K562 (cell line): ENCODE measurements at regions of chr2 and their contacts with region 1.

Region 1: DNA sequence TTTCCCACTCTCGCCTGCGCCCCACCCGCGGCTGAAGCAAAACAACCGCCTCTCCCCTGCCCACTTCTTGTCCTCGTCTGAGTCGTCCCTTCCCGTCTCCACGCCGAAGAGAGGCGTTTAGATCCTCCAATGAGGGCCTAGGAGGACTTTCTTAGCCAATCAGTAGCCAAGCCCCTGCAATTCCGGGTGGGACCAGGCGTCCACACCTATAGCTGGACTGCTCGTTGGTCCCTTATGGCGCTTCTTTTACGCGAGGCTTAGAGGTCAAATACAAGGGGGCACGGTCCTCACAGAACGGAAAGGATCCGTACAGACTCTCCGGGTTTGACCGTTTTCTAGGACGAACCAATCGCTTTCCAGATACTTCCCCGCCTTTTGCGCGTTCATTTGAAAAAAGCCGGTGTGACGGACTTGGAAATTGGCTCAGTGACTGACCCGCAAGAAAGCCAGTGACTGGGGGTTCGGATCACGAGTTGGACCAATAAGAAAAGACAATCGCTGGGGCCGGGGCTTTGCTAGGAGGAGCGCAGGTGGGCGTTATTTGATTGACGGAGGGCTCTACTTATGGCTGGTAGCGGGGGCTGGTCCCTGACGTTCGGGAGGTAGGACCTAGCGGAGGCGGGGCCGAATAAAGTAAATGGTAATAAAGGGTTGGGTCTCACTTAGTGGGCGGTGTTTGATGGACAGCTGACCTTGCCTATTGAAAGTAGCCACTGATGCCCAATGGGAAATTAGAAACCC is 565 bp upstream of the PPM1B start:
- DNase-seq: peak; percentile 93 to 99 (median 96)
- ATAC-seq: peak; percentile 89
- H3K4me3 ChIP-seq: peak overlapping the region; percentile 58
- H3K27ac ChIP-seq: peak overlapping the region; percentile 100
- H3K4me1 ChIP-seq: peaks cover 4 to 7% of the 10 kb centered on the region in 2 experiments; a peak in 3 of 5 replicates
- H3K27me3 ChIP-seq: no peaks in the 10 kb centered on the region
- CTCF ChIP-seq: no peak
- EP300 ChIP-seq: peak; percentile 19; the same call in 1 of the 2 replicates
- POLR2A ChIP-seq: peak; percentile 65
- RAD21 ChIP-seq: no peak

Region 2: DNA sequence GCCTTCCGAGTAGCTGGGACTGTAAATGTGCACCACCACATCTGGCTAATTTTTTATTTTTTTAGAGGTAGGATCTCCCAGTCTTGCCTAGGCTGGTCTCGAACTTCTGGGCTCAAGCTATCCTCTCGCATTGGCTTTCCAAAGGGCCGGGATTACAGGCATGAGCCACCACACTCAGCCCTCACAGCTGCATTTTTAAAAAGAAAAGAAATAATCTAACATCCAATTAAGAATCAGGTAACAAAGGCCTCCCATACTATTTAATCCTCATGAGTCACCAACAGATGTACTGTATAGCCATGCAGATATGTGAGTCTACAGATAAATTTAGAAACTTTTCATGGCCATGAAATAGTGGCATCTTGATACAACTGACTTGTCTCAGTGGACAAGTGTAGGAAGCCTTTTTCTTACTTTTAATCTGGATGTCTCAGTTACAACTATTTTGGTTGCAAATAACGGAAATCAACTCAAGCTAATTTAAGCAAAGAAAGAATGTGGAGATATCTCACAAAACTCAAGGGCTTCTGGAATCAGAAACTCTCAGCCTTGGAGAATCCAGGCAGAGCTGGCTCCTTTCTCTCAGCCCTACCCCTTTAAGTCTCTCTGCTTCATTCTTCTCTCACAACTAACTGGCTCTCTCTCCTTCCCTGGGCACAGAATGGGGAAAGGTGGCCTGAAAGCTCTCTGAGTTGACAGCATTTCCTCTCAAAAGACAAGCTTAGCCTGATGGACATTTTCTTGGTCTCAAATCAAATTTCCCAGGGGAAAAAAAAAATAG is 12.3 kb before region 1 on chr2:
- CTCF ChIA-PET with region 1: no interaction called
- POLR2A ChIA-PET with region 1: interaction called, 15 read pairs
- in situ Hi-C with region 1: no loop called
- intact Hi-C with region 1: no loop called
- DNase-seq: peak in 2 of 4 experiments; percentile 38 to 44
- ATAC-seq: peak; percentile 77
- H3K4me3 ChIP-seq: no peak overlapping the region
- H3K27ac ChIP-seq: peak overlapping the region; percentile 58
- H3K4me1 ChIP-seq: peaks cover 3 to 16% of the 10 kb centered on the region in 2 experiments; a peak in 2 of 5 replicates
- H3K27me3 ChIP-seq: peaks cover 0 to under 1% of the 10 kb centered on the region in 2 experiments; a peak in 1 of 5 replicates
- CTCF ChIP-seq: no peak
- EP300 ChIP-seq: no peak; the same call in 1 of the 2 replicates
- POLR2A ChIP-seq: no peak
- RAD21 ChIP-seq: no peak

Region 3: DNA sequence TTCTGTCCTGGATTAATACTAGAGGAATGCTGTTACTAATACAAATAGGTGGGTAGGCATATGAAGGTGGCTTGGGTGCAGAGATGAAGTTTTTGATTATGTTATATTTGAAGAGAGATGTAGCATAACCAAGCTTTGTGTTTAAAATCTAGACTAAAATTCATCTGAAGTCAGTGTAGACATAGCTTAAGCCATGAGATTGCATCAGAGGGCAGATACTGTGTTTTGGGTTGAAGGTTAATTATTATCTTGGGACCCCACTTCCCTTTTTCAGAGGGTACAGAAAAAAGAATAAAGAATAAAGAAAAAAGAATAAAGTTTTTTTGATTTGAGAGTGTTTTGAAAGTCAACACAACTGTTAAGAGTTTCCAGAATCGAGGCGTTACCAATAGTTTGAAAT is 13.5 kb after region 1 on chr2:
- CTCF ChIA-PET with region 1: interaction called, 5 read pairs
- POLR2A ChIA-PET with region 1: interaction called, 28 read pairs
- in situ Hi-C with region 1: no loop called
- intact Hi-C with region 1: no loop called
- DNase-seq: no peak
- ATAC-seq: no peak
- H3K4me3 ChIP-seq: no peak overlapping the region
- H3K27ac ChIP-seq: no peak overlapping the region
- H3K4me1 ChIP-seq: peaks cover 0 to 5% of the 10 kb centered on the region in 2 experiments; a peak in 3 of 5 replicates
- H3K27me3 ChIP-seq: no peaks in the 10 kb centered on the region
- CTCF ChIP-seq: no peak
- EP300 ChIP-seq: no peak
- POLR2A ChIP-seq: no peak
- RAD21 ChIP-seq: no peak